ENCODE measurements at regions of chr11 and their contacts with region 1.

Region 1: GRCh38 chr11:32985600-32985999 is 30.1 kb upstream of the DEPDC7 start:
- DNase-seq: no peak
- ATAC-seq: no peak
- H3K4me3 ChIP-seq: no peak overlapping the region
- H3K4me3 Mint-ChIP-seq: no peak overlapping the region
- H3K27ac ChIP-seq: no peak overlapping the region
- H3K27ac Mint-ChIP-seq: no peak overlapping the region
- H3K4me1 ChIP-seq: no peaks in the 10 kb centered on the region
- H3K4me1 Mint-ChIP-seq: peaks cover 0 to 3% (median 0%) of the 10 kb centered on the region in 7 donors
- H3K27me3 ChIP-seq: no peaks in the 10 kb centered on the region
- H3K27me3 Mint-ChIP-seq: peaks cover 0 to 2% (median 0%) of the 10 kb centered on the region in 5 donors

Region 2: DNA sequence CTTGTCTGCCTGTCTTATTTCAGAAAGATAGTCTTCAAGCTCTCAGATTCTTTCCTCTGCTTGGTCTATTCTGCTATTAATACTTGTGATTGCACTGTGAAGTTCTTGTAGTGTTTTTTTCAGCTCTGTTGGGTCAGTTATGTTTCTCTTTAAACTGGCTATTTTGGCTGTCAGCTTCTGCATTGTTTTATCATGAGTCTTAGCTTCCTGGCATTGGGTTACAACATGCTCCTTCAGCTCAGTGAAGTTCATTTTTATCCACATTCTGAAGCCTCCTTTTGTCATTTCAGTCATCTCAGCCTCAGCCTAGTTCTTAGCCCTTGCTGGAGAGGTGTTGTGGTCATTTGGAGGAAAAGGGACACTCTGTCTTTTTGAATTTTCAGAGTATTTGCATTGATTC is 14.6 kb after region 1 on chr11:
- CTCF ChIA-PET with region 1: interaction called, 4 read pairs
- POLR2A ChIA-PET with region 1: interaction called, 3 read pairs
- intact Hi-C with region 1: loop called in 1 of 2 experiments (anchors 2 kb)
- DNase-seq: no peak
- ATAC-seq: no peak
- H3K4me3 ChIP-seq: no peak overlapping the region
- H3K4me3 Mint-ChIP-seq: no peak overlapping the region
- H3K27ac ChIP-seq: no peak overlapping the region
- H3K27ac Mint-ChIP-seq: no peak overlapping the region
- H3K4me1 ChIP-seq: peaks cover 0 to 11% of the 10 kb centered on the region in 2 donors
- H3K4me1 Mint-ChIP-seq: peaks cover 7 to 17% (median 13%) of the 10 kb centered on the region in 7 donors
- H3K27me3 ChIP-seq: no peaks in the 10 kb centered on the region
- H3K27me3 Mint-ChIP-seq: peaks cover 0 to 73% (median 0%) of the 10 kb centered on the region in 5 donors

Measured in naive thymus-derived CD4-positive, alpha-beta T cell (primary cell).